B cell (primary cell): ENCODE measurements at regions of chr4 and their contacts with region 1.

Region 1: DNA sequence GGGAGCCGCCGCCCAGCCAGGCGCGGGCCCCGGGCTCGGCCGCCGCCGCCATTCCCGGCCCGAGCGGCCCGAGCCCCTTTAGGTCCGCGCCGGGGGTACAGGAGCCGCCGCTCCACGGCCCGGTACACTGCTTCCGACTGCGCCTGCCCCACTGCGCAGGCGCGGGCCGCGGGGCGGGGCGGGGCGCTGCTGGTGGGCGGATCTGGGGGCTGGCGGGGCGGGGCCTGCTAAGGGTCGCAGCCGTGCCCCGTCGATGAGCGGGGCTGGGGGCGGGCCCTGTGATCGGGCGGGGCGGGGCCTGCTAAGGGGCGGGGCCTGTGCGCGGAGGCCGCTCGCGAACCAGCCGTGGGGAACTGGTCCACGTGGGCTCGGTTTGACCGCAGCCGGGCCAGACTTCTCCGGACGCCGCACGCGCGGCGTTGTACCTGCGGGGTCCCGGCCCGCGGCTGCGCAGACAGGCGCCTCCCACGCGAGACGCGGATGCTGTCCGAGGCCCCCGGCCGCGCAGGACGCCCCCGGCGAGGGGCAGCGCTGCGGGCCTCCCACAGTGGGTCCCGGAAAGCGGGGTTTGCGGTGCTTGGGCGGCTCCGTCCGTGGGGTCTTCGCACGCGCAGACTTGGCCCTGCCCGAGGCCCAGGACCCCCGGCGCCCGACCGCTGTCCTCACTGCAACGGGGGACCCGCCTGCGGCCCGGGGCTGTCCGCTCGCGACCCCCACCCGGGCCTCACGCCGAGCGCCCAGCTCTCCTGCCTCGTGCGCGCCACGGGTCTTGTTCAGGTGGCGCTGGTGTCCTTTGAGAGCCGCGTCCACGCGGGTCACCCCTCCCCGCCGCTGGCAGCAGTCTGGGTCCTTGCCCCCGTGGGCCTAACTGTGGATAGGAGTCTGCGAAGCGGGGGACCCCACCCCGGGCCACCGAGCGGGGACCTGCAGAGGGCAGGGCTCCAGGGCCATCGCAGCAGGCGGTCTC is at the start of gene DGKQ:
- DNase-seq: peak; percentile 92
- ATAC-seq: peak; percentile 99
- H3K4me3 ChIP-seq: peak within 1 kb of the TSS; percentile 23 to 76 (median 66)
- H3K4me3 Mint-ChIP-seq: peak within 1 kb of the TSS; percentile 61
- H3K27ac ChIP-seq: no peak within 1 kb of the TSS
- H3K27ac Mint-ChIP-seq: peak within 1 kb of the TSS; percentile 41
- H3K4me1 ChIP-seq: peaks cover 10 to 17% of the 10 kb centered on the region in 2 donors
- H3K4me1 Mint-ChIP-seq: peaks cover 9% of the 10 kb centered on the region
- H3K27me3 ChIP-seq: peaks cover 0 to under 1% (median 0%) of the 10 kb centered on the region in 4 experiments
- H3K27me3 Mint-ChIP-seq: no peaks in the 10 kb centered on the region
- CTCF ChIP-seq: no peak
- total RNA-seq, gene DGKQ: 30.4 and 34.9 TPM in 2 replicates

Region 2: DNA sequence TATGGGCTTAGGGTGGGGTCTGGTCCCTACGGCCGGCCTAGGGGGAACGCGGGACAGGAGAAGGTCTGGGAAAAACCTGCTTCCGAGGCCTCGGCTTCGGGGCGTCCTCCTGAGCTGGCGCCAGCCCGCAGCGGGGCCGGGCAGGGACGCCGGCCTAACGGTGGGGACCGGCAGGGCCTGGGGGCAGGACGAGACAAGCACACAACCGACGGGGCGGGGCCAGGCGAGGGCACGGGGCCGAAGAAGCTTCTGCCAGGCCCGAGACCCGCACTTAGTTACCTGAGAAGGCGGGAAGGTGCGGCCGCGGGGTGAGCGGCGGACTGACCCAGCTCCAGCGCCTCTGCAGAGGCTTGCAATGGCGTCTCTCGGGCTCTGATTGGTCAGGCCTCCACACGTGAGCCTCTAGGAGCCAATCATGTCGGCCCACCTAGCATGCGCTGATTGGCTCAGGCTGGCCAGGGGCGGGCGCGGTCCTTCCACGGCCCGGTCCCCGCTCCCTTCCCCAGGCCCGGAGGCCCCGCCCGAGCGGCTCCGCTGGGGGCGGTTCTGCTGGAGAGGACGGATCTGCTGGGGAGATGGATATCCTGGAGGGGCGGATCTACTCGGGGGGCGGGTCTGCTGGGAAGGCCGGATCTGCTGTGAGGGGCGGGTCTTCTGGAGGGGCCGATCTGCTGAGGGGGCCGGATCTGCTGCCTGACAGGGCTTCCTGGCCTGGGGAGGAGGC is 192.1 kb before region 1 on chr4:
- CTCF ChIA-PET with region 1: no interaction called
- POLR2A ChIA-PET with region 1: no interaction called
- intact Hi-C with region 1: loop called (anchors 1 kb)
- DNase-seq: peak; percentile 99
- ATAC-seq: peak; percentile 94
- H3K4me3 ChIP-seq: peak overlapping the region; percentile 23 to 97 (median 85)
- H3K4me3 Mint-ChIP-seq: peak overlapping the region; percentile 94
- H3K27ac ChIP-seq: peak overlapping the region; percentile 82 to 95
- H3K27ac Mint-ChIP-seq: peak overlapping the region; percentile 91
- H3K4me1 ChIP-seq: peaks cover 38 to 40% of the 10 kb centered on the region in 2 donors
- H3K4me1 Mint-ChIP-seq: peaks cover 48% of the 10 kb centered on the region
- H3K27me3 ChIP-seq: peaks cover 0 to 26% (median 11%) of the 10 kb centered on the region in 4 experiments
- H3K27me3 Mint-ChIP-seq: peaks cover 18% of the 10 kb centered on the region
- CTCF ChIP-seq: no peak

Region 3: GRCh38 chr4:1043658-1044468 is 70.1 kb after region 1 on chr4:
- CTCF ChIA-PET with region 1: no interaction called
- POLR2A ChIA-PET with region 1: no interaction called
- intact Hi-C with region 1: no loop called
- DNase-seq: no peak
- ATAC-seq: no peak
- H3K4me3 ChIP-seq: no peak overlapping the region
- H3K4me3 Mint-ChIP-seq: no peak overlapping the region
- H3K27ac ChIP-seq: no peak overlapping the region
- H3K27ac Mint-ChIP-seq: no peak overlapping the region
- H3K4me1 ChIP-seq: peaks cover 0 to 10% of the 10 kb centered on the region in 2 donors
- H3K4me1 Mint-ChIP-seq: peaks cover 2% of the 10 kb centered on the region
- H3K27me3 ChIP-seq: peaks cover 0 to 33% (median 14%) of the 10 kb centered on the region in 4 experiments
- H3K27me3 Mint-ChIP-seq: peaks cover 18% of the 10 kb centered on the region
- CTCF ChIP-seq: no peak